CD4-positive, alpha-beta T cell (primary cell): ENCODE measurements at regions of chrX and their contacts with region 1.

Region 1: DNA sequence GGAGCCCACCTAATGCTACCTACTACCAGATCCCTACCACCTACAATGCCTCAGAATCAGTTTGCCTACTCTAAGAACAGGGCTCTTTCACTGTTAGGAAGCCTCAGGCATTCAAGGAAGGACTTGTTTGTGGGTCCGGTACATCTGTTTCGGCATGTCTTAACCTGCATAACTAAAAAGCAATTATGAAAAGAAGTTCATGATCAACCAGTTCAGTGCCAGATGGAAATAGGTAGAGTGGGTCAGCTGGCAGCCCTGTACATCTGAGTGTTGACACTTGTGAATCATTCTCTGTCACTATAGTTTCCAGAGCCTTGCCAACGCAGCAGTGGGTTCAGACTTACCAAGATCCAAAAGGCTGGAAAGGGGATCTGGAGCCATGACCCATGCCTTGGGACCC is 3.3 kb downstream of the TMEM185A start:
- DNase-seq: no peak
- ATAC-seq: no peak
- H3K4me3 ChIP-seq: no peak overlapping the region
- H3K4me3 Mint-ChIP-seq: no peak overlapping the region
- H3K27ac ChIP-seq: no peak overlapping the region
- H3K27ac Mint-ChIP-seq: no peak overlapping the region
- H3K4me1 ChIP-seq: peaks cover 25% of the 10 kb centered on the region
- H3K4me1 Mint-ChIP-seq: peaks cover 64% of the 10 kb centered on the region
- H3K27me3 ChIP-seq: no peaks in the 10 kb centered on the region
- H3K27me3 Mint-ChIP-seq: no peaks in the 10 kb centered on the region
- CTCF ChIP-seq: no peak

Region 2: GRCh38 chrX:149825424-149825823 is 197.1 kb after region 1 on chrX:
- CTCF ChIA-PET with region 1: no interaction called
- POLR2A ChIA-PET with region 1: no interaction called
- intact Hi-C with region 1: loop called in 1 of 2 experiments (anchors 10 kb)
- DNase-seq: peak in 13 of 14 experiments; percentile 14 to 58 (median 33)
- ATAC-seq: no peak
- H3K4me3 ChIP-seq: no peak overlapping the region
- H3K4me3 Mint-ChIP-seq: no peak overlapping the region
- H3K27ac ChIP-seq: no peak overlapping the region
- H3K27ac Mint-ChIP-seq: no peak overlapping the region
- H3K4me1 ChIP-seq: peaks cover 19% of the 10 kb centered on the region
- H3K4me1 Mint-ChIP-seq: peaks cover 14% of the 10 kb centered on the region
- H3K27me3 ChIP-seq: no peaks in the 10 kb centered on the region
- H3K27me3 Mint-ChIP-seq: no peaks in the 10 kb centered on the region
- CTCF ChIP-seq: peak; percentile 28